HepG2 (cell line): ENCODE measurements at regions of chr20 and their contacts with region 1.

Region 1: DNA sequence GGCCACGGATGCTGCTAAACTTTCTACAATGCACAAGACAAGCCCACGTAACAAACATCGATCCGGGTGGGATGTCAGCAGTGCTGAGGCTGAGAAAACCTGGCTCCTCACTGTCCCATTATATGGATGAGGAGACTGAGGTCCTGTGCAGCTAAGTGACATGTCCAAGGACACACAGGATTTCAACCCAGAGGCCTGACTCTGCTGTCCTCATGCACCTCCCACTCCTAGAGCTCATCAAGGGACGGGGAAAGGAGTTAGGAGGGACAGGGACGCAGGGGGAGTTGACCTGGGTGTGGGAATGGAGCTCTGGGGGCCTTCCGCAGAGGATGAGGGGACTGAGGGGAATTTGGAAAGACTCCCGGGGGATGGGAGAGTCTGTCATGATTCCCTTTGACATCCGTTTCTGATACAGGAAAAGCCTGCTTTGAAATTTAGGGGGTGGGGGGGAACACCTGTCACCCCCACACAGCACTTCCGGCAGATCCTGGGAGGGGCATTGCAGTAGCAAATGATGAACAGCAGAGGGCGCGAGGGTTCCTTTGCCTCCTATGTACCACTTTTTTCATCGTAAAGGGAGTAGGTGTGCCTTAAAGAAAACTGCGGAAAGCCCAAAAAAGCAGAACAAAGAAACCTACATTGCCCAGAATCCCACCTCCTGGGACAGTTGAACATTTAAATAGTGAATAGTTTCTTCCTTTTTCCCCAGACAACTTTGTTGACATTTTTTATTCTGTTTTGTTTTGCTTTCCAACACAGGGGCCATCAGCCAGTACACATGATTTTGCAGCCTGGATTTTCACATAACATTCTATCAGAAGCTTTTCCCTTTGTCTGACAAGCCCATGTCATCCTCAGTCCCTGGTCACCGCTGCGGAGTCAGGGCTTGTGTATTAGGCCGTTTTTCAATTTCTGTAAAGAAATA is 48.6 kb downstream of the SLC2A10 start:
- DNase-seq: peak; percentile 59
- ATAC-seq: peak; percentile 64
- H3K4me3 ChIP-seq: no peak overlapping the region
- H3K27ac ChIP-seq: no peak overlapping the region
- H3K4me1 ChIP-seq: no peaks in the 10 kb centered on the region
- H3K27me3 ChIP-seq: peaks cover 4 to 40% of the 10 kb centered on the region in 2 experiments; a peak in 4 of 5 replicates
- CTCF ChIP-seq: peak; percentile 91
- EP300 ChIP-seq: no peak
- POLR2A ChIP-seq: no peak
- RAD21 ChIP-seq: peak; percentile 73

Region 2: DNA sequence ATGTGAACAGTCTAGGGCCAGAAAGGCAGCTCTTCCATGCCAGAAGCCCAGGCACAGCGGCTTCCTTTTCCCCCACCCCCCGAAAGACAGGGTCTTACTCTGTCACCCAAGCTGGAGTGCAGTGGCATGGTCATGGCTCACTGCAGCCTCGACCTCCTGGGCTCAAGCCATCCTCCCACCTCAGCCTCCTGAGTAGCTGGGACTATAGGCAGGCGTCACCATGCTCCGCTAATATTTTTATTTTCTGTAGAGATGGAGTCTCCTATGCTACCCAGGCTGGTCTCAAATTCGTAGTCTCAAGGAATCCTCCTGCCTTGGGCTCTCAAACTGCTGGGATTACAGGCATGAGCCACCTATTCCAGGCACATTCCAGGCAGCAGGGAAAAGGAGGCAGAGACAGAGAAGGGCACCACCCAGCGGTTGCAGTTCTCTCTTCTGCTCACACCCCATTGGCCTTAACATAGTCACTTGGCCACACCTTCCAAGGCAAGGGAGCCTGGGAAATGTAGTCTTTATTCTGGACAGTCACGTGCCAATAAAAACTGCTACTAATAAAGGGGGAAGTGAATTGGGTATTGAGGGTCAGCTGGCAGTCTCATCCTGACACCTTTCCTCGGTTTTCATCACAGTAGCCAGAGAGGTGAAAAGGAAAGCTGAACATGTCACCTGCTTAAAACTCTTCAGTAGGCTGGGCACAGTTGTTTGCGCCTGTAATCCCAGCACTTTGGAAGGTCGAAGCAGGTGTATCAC is 392.6 kb after region 1 on chr20:
- CTCF ChIA-PET with region 1: interaction called, 28 read pairs
- POLR2A ChIA-PET with region 1: no interaction called
- in situ Hi-C with region 1: loop called (anchors 5 kb)
- intact Hi-C with region 1: loop called (anchors 1 kb)
- DNase-seq: peak; percentile 86
- ATAC-seq: peak; percentile 97
- H3K4me3 ChIP-seq: no peak overlapping the region
- H3K27ac ChIP-seq: no peak overlapping the region
- H3K4me1 ChIP-seq: peaks cover 29% of the 10 kb centered on the region
- H3K27me3 ChIP-seq: peaks cover 0 to 11% of the 10 kb centered on the region in 2 experiments; a peak in 3 of 5 replicates
- CTCF ChIP-seq: peak; percentile 98
- EP300 ChIP-seq: no peak
- POLR2A ChIP-seq: no peak
- RAD21 ChIP-seq: peak; percentile 93

Region 3: DNA sequence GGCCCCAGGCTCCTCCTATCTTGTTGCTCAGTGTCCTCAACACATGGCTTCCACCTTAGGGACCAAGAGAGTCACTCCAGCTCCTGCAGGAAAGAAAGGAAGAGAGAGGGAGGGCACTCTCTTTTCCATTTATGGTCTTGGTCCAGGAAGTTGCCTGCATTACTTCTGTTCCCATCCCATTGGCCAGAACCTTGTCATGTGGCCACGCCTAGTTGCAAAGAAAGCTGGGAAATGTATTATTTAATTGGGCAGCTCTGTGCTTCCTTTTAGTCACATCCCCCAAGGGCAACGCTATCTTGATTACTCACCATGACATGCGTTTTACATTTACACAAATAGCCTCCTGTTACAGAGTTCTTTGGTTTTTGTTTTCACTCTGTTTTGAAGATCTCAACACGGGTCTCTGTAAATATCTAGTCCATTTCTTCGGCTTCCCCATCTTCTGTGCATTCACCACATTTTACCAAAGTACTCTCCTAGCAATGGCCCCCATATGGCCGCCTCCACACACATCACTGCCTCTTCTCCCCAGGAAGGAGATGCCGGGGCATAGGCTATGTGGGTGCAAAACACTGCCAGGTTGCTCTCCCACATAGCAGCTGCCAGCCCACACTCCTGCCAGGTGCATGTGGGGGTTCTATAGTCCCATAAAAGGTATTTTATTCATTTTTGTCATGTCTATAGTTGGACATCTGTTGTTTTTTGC is 634.2 kb after region 1 on chr20:
- CTCF ChIA-PET with region 1: no interaction called
- POLR2A ChIA-PET with region 1: no interaction called
- in situ Hi-C with region 1: loop called (anchors 25 kb)
- intact Hi-C with region 1: no loop called
- DNase-seq: peak; percentile 71
- ATAC-seq: peak; percentile 53
- H3K4me3 ChIP-seq: no peak overlapping the region
- H3K27ac ChIP-seq: no peak overlapping the region
- H3K4me1 ChIP-seq: peaks cover 38% of the 10 kb centered on the region
- H3K27me3 ChIP-seq: no peaks in the 10 kb centered on the region
- CTCF ChIP-seq: no peak
- EP300 ChIP-seq: peak in 1 of 2 experiments; percentile 18; a peak in 1 of 4 replicates
- POLR2A ChIP-seq: no peak
- RAD21 ChIP-seq: no peak